ENCODE measurements at regions of chr11 and their contacts with region 1.

Region 1: GRCh38 chr11:111878849-111879636 is at the starts of genes CFAP68 and FDXACB1:
- DNase-seq: peak; percentile 97
- ATAC-seq: peak; percentile 96
- H3K4me3 ChIP-seq: peak within 1 kb of the TSS; percentile 78 to 83 (median 81)
- H3K27ac ChIP-seq: peak within 1 kb of the TSS; percentile 95
- H3K4me1 ChIP-seq: peaks cover 11% of the 10 kb centered on the region
- H3K27me3 ChIP-seq: no peaks in the 10 kb centered on the region; a peak in 1 of 5 replicates
- CTCF ChIP-seq: peak; percentile 99
- EP300 ChIP-seq: peak; percentile 68 to 75; a peak in 2 of 4 replicates
- POLR2A ChIP-seq: peak; percentile 32 to 69; a peak in 3 of 4 replicates
- RAD21 ChIP-seq: peak; percentile 96
- total RNA-seq, gene CFAP68: 22.2 and 23.9 TPM in 2 replicates
- total RNA-seq, gene FDXACB1: 3.4 and 5.5 TPM in 2 replicates

Region 2: GRCh38 chr11:111283945-111284481 is 595.0 kb before region 1 on chr11:
- CTCF ChIA-PET with region 1: no interaction called
- POLR2A ChIA-PET with region 1: no interaction called
- in situ Hi-C with region 1: no loop called
- intact Hi-C with region 1: no loop called
- DNase-seq: no peak
- ATAC-seq: no peak
- H3K4me3 ChIP-seq: no peak overlapping the region
- H3K27ac ChIP-seq: no peak overlapping the region
- H3K4me1 ChIP-seq: peaks cover 74% of the 10 kb centered on the region
- H3K27me3 ChIP-seq: 0 out of 5 replicates have a peak, but pooled peaks cover 0 to 5% of the 10 kb centered on the region in 2 experiments
- CTCF ChIP-seq: no peak
- EP300 ChIP-seq: no peak
- POLR2A ChIP-seq: no peak
- RAD21 ChIP-seq: no peak

Region 3: DNA sequence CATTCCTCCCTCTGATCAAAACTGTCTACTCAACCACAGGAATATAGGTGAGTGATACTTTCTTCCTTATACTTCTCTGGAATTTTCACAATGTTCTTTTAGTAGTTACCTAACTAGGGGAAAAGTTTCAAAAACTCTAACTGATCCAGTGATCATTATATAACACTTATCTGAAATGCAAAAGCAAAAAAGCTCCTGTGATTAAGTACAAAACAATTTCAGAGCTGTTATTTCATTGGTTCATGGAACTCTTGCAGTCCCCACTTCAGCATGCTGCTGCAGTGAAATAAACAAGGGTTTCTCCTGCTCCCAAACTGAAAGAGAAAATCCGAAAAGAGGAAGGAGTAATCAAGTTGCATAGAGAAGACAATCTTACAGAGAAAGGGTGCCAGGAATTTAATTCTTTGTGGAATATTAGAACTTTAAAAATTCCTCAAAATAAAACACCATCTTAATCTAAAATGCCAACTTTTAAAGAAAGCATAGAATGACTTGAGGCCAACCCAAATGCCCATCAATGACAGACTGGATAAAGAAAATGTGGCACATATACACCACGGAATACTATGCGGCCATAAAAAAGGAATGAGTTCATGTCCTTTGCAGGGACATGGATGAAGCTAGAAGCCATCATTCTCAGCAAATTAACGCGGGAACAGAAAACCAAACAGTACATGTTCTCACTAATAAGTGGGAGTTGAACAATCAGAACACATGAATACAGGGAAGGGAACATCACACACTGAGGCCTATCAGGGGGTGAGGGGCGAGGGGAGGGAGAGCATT is 133.1 kb before region 1 on chr11:
- CTCF ChIA-PET with region 1: no interaction called
- POLR2A ChIA-PET with region 1: no interaction called
- in situ Hi-C with region 1: no loop called
- intact Hi-C with region 1: no loop called
- DNase-seq: no peak
- ATAC-seq: no peak
- H3K4me3 ChIP-seq: no peak overlapping the region
- H3K27ac ChIP-seq: no peak overlapping the region
- H3K4me1 ChIP-seq: no peaks in the 10 kb centered on the region
- H3K27me3 ChIP-seq: no peaks in the 10 kb centered on the region
- CTCF ChIP-seq: no peak
- EP300 ChIP-seq: no peak
- POLR2A ChIP-seq: no peak
- RAD21 ChIP-seq: no peak

Region 4: GRCh38 chr11:111836721-111837120 is 42.3 kb before region 1 on chr11:
- CTCF ChIA-PET with region 1: no interaction called
- POLR2A ChIA-PET with region 1: no interaction called
- in situ Hi-C with region 1: no loop called
- intact Hi-C with region 1: no loop called
- DNase-seq: no peak
- ATAC-seq: no peak
- H3K4me3 ChIP-seq: no peak overlapping the region
- H3K27ac ChIP-seq: no peak overlapping the region
- H3K4me1 ChIP-seq: peaks cover 40% of the 10 kb centered on the region
- H3K27me3 ChIP-seq: no peaks in the 10 kb centered on the region
- CTCF ChIP-seq: no peak
- EP300 ChIP-seq: no peak
- POLR2A ChIP-seq: no peak
- RAD21 ChIP-seq: no peak

Region 5: DNA sequence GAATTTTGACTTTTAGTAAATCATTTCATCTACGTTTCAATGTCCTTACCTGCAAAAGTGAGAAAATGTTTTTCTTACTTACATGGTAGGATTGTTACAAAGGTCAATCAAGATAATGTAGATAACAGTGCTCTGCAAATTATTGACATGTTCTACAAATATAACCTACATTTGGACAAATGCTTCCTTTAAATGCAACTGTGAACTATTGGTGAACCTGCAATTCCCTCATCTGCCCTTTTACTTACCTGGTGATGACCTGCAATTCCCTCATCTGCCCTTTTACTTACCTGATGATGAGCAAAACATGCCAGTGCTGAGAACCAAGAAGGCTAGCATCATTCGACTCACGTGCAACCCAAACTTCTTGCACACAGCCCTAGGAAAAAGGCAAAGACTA is 18.8 kb before region 1 on chr11:
- CTCF ChIA-PET with region 1: no interaction called
- POLR2A ChIA-PET with region 1: no interaction called
- in situ Hi-C with region 1: no loop called
- intact Hi-C with region 1: no loop called
- DNase-seq: no peak
- ATAC-seq: no peak
- H3K4me3 ChIP-seq: no peak overlapping the region
- H3K27ac ChIP-seq: no peak overlapping the region
- H3K4me1 ChIP-seq: 0 out of 2 replicates have a peak, but pooled peaks cover 8% of the 10 kb centered on the region
- H3K27me3 ChIP-seq: no peaks in the 10 kb centered on the region
- CTCF ChIP-seq: no peak
- EP300 ChIP-seq: no peak
- POLR2A ChIP-seq: no peak
- RAD21 ChIP-seq: no peak

Region 6: GRCh38 chr11:111911563-111912401 is 32.7 kb after region 1 on chr11 and contains the start of gene CRYAB:
- CTCF ChIA-PET with region 1: no interaction called
- POLR2A ChIA-PET with region 1: no interaction called
- in situ Hi-C with region 1: no loop called
- intact Hi-C with region 1: loop called (anchors 1 kb)
- DNase-seq: peak; percentile 32
- ATAC-seq: peak; percentile 46
- H3K4me3 ChIP-seq: peak within 1 kb of the TSS in 1 of 3 experiments; percentile 17; a peak in 1 of 6 replicates
- H3K27ac ChIP-seq: no peak within 1 kb of the TSS
- H3K4me1 ChIP-seq: peaks cover 50% of the 10 kb centered on the region
- H3K27me3 ChIP-seq: no peaks in the 10 kb centered on the region; a peak in 1 of 5 replicates
- CTCF ChIP-seq: no peak
- EP300 ChIP-seq: no peak
- POLR2A ChIP-seq: no peak
- RAD21 ChIP-seq: no peak
- total RNA-seq, gene CRYAB: 0.55 and 0.69 TPM in 2 replicates

Region 7: GRCh38 chr11:111918390-111919258 is 39.6 kb after region 1 on chr11 and contains the start of gene C11orf52:
- CTCF ChIA-PET with region 1: no interaction called
- POLR2A ChIA-PET with region 1: interaction called, 6 read pairs
- in situ Hi-C with region 1: no loop called
- intact Hi-C with region 1: loop called (anchors 2 kb)
- DNase-seq: peak; percentile 89
- ATAC-seq: peak; percentile 91
- H3K4me3 ChIP-seq: peak within 1 kb of the TSS; percentile 49 to 66 (median 58)
- H3K27ac ChIP-seq: peak within 1 kb of the TSS; percentile 66
- H3K4me1 ChIP-seq: peaks cover 88% of the 10 kb centered on the region
- H3K27me3 ChIP-seq: no peaks in the 10 kb centered on the region
- CTCF ChIP-seq: peak; percentile 44
- EP300 ChIP-seq: peak in 1 of 2 experiments; percentile 25; a peak in 2 of 4 replicates
- POLR2A ChIP-seq: peak; percentile 46 to 54; a peak in 2 of 4 replicates
- RAD21 ChIP-seq: peak; percentile 47; the same call in 1 of the 2 replicates
- total RNA-seq, gene C11orf52: 7.4 and 10.5 TPM in 2 replicates

Region 8: GRCh38 chr11:111926505-111927391 is 47.7 kb after region 1 on chr11:
- CTCF ChIA-PET with region 1: no interaction called
- POLR2A ChIA-PET with region 1: interaction called, 8 read pairs
- in situ Hi-C with region 1: loop called (anchors 5 kb)
- intact Hi-C with region 1: loop called (anchors 2 kb)
- DNase-seq: peak; percentile 93
- ATAC-seq: peak; percentile 93
- H3K4me3 ChIP-seq: peak overlapping the region; percentile 32 to 60 (median 47); a peak in 5 of 6 replicates
- H3K27ac ChIP-seq: peak overlapping the region; percentile 92
- H3K4me1 ChIP-seq: peaks cover 71% of the 10 kb centered on the region
- H3K27me3 ChIP-seq: no peaks in the 10 kb centered on the region
- CTCF ChIP-seq: no peak
- EP300 ChIP-seq: peak in 1 of 2 experiments; percentile 50; a peak in 2 of 4 replicates
- POLR2A ChIP-seq: peak; percentile 67 to 84
- RAD21 ChIP-seq: no peak

Region 9: GRCh38 chr11:112074026-112074811 is 195.2 kb after region 1 on chr11 and contains the start of gene NKAPD1:
- CTCF ChIA-PET with region 1: no interaction called
- POLR2A ChIA-PET with region 1: no interaction called
- in situ Hi-C with region 1: no loop called
- intact Hi-C with region 1: loop called (anchors 1 kb)
- DNase-seq: peak; percentile 85
- ATAC-seq: peak; percentile 91
- H3K4me3 ChIP-seq: peak within 1 kb of the TSS; percentile 81 to 99 (median 99)
- H3K27ac ChIP-seq: peak within 1 kb of the TSS; percentile 99
- H3K4me1 ChIP-seq: peaks cover 15% of the 10 kb centered on the region
- H3K27me3 ChIP-seq: no peaks in the 10 kb centered on the region; a peak in 1 of 5 replicates
- CTCF ChIP-seq: no peak
- EP300 ChIP-seq: no peak
- POLR2A ChIP-seq: peak in 1 of 2 experiments; percentile 60; a peak in 3 of 4 replicates
- RAD21 ChIP-seq: no peak
- total RNA-seq, gene NKAPD1: 22.5 and 31.8 TPM in 2 replicates